Dorsolateral prefrontal cortex (tissue), 120 donors: ENCODE measurements at regions of chr12 and their contacts with region 1.

Region 1: DNA sequence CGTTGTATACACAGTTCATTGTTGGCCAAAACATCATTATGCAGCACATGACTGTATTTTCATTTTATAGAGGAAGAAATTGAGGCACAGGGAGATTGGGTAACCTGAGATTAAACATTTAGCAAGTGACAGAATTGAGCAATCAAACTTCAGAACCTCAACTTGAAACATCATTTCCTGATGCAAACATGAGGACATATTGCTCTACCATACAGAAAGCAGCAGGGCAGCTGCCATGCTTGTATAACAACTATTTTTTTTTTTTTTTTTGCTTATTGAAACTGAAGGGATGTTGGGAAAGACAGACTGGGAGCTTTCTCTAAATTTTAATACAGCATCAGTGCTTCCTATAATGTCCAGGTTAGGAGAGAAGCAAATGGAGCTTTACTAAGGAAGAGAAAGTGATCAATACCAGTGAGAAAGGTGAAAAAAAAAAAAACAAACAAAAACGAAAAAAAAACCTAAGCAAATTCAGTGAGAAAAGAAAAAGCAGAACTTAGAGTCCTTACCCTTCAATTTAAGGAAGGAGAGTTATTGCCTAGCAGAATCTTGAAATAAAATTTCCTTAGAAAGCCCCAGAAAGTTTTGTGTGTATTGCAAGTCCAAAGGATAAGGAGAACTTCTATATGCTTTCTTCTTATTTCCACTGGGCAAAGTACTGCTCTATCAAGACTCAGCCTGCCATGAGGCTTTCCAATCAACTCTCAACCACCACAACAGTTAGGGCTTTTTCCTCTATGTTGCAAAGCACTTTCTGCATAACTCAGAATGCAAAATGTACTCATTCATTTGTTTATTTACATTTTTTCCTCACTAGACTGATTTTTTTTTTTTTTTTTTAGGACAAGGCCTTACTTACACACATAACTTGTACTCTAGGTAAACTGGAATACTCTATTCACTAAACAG is 21.6 kb downstream of the BTG1 start:
- DNase-seq: no peak
- H3K4me3 ChIP-seq: no peak overlapping the region
- H3K27ac ChIP-seq: peak overlapping the region in 3 of 59 donors; percentile 15 to 26 (median 24)
- H3K27me3 ChIP-seq: no peaks in the 10 kb centered on the region
- CTCF ChIP-seq: no peak

Region 2: GRCh38 chr12:92059976-92060375 is 64.1 kb before region 1 on chr12:
- intact Hi-C with region 1: no loop called
- DNase-seq: no peak
- H3K4me3 ChIP-seq: no peak overlapping the region
- H3K27ac ChIP-seq: no peak overlapping the region
- H3K27me3 ChIP-seq: no peaks in the 10 kb centered on the region
- CTCF ChIP-seq: no peak

Region 3: GRCh38 chr12:92073094-92073493 is 50.9 kb before region 1 on chr12:
- intact Hi-C with region 1: loop called in 1 of 2 experiments (anchors 2 kb)
- DNase-seq: no peak
- H3K4me3 ChIP-seq: no peak overlapping the region
- H3K27ac ChIP-seq: no peak overlapping the region
- H3K27me3 ChIP-seq: no peaks in the 10 kb centered on the region
- CTCF ChIP-seq: no peak